Psoas muscle (tissue), 8 donors: ENCODE measurements at regions of chr5 and their contacts with region 1.

Region 1: DNA sequence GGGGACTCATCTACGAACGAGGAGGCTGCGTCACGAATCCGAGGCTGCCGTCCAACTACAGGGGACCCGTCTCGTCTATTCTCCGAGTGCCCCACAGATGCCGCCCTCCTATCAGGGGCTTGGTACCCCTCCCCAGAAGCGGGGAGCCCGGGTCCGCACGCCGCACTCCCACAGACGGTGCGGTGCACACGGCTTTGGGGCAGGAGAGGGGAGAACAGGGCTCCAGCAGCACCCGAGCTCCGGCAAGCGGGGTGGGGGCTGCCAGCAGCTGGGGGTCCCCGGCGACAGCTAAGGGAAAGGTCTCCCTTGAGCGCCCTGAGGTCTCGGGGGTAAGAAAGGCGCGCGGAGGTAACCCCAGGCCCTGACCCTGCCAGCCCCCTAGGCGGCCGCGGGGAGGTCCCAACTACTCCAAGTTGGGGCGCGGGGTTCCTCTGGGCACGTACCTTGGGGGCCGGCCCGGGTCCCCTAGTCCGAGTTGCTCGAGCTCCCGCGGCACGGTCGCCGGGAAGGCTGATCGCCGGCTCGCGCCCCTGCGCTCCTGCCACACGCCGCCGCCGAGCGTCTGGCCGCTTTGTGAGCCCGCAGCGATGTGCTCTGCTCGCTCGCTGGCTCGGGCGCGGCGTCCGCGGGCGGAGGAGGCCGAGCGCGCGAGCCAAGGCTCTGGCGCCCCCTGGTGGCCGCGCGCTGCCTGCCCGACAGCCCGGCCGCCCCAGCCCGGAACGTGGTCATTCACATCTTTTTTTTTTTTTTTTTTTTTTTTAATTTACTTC is at the start of gene SPOCK1:
- DNase-seq: peak; percentile 81 to 86
- ATAC-seq: peak; percentile 92 to 96 (median 96)
- H3K4me3 ChIP-seq: peak within 1 kb of the TSS; percentile 65
- H3K27ac ChIP-seq: no peak within 1 kb of the TSS
- H3K4me1 ChIP-seq: no peaks in the 10 kb centered on the region
- H3K27me3 ChIP-seq: peaks cover 0 to 4% (median 0%) of the 10 kb centered on the region in 3 donors
- CTCF ChIP-seq: peak; percentile 85
- total RNA-seq, gene SPOCK1: 11.3 to 52.7 (median 29.3) TPM

Region 2: DNA sequence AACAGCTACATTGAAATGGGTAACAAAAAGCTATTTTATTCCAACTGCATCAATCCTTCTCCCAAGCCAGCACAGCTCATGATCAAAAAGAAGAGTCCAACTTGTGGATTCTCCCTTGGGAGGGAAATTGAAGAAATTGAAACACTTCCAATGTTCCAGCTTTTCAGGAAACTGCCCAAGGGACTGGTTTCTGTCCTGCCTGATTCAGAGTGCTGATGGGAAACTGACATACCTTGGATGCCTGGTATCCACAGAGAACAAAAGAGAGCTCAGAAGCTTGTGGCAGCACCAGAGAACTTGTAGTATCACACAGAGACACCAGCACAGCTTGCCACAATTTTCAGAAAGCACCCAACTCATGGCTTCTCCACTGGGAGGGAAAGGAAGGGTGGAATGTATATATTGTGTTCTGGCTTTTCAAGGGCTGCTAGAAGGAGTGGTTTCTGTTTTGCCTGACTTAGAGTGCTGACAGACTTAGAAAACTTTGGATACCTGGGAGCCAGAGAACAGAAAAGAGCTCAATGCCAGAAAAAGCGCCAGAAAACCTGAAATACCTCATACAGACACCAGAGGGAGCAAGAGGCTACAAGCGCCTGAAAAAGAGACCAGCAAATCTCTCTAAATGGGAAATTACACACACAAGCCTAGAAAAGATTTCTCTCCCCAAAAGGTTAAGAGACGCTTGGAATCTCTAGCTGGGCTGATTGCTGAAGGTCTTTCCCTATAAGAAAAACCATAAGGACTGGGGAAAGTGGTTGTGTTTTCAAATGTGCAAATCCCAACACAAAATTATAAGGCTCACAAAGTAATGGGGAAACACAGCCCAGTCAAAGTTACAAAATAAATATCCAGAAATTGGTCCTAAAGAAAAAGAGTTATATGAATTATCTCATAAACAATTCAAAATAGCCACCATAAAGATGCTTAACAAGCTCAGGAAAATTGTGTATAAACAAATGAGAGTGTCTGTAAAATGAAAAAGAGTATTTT is 178.6 kb before region 1 on chr5:
- intact Hi-C with region 1: loop called (anchors 1 to 5 kb)
- DNase-seq: no peak
- ATAC-seq: peak in 3 of 4 donors; percentile 48 to 59 (median 54)
- H3K4me3 ChIP-seq: no peak overlapping the region
- H3K27ac ChIP-seq: no peak overlapping the region
- H3K4me1 ChIP-seq: peaks cover 6% of the 10 kb centered on the region
- H3K27me3 ChIP-seq: no peaks in the 10 kb centered on the region
- CTCF ChIP-seq: peak; percentile 79

Region 3: GRCh38 chr5:137344723-137345322 is 154.1 kb before region 1 on chr5:
- intact Hi-C with region 1: loop called (anchors 2 kb)
- DNase-seq: no peak
- ATAC-seq: peak in 1 of 4 donors; percentile 55
- H3K4me3 ChIP-seq: no peak overlapping the region
- H3K27ac ChIP-seq: no peak overlapping the region
- H3K4me1 ChIP-seq: no peaks in the 10 kb centered on the region
- H3K27me3 ChIP-seq: no peaks in the 10 kb centered on the region
- CTCF ChIP-seq: peak; percentile 68

Region 4: DNA sequence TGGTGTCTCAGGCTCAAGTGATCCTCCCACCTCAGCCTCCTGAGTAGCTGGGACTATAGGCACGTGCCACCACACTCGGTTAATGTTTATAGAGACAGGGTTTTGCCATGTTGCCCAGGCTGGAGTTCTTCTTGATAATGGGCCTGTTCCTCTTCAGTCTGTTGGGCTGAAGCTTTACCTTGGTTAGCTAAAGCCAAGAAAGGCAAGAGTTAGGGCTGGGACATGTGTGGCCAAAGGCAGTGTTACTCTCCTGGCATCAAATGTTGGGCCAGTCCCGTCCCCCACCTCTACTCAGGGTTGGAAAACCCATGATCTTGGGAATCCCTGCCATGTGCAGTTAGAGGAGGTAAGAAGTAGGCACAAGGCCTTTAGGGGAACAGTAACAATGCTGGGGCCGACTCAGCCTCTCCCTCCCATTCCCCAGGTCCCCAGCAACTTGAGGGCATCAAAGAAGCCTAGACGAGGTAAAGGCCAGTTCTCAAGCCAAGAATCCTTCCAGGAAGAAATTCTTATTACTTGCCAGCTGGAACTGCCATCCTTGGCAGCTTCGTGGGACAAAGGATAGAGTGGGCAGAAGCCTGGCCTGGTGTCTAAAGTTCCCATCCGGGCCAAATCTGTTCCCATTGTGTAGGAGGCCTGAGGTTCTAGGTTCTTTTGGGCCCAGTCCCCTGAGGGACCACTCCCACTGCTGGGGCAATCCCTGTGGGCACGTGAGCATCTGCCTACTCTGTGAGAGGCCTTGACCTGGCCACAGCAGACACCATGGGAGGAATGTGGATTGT is 970.8 kb after region 1 on chr5:
- intact Hi-C with region 1: no loop called
- DNase-seq: peak in 1 of 2 donors; percentile 39
- ATAC-seq: peak in 3 of 4 donors; percentile 5 to 15 (median 12)
- H3K4me3 ChIP-seq: no peak overlapping the region
- H3K27ac ChIP-seq: no peak overlapping the region
- H3K4me1 ChIP-seq: peaks cover 5% of the 10 kb centered on the region
- H3K27me3 ChIP-seq: no peaks in the 10 kb centered on the region
- CTCF ChIP-seq: no peak